Heart left ventricle (tissue), 16 donors: ENCODE measurements at regions of chr21 and their contacts with region 1.

Region 1: GRCh38 chr21:26842976-26843932 is 2.0 kb downstream of the ADAMTS1 start:
- DNase-seq: peak; percentile 93 to 96 (median 94)
- ATAC-seq: peak; percentile 60 to 68 (median 64)
- H3K4me3 ChIP-seq: peak overlapping the region; percentile 61 to 94 (median 84)
- H3K27ac ChIP-seq: peak overlapping the region; percentile 96 to 98 (median 98)
- H3K4me1 ChIP-seq: peaks cover 15 to 65% (median 46%) of the 10 kb centered on the region in 12 donors
- H3K27me3 ChIP-seq: peaks cover 0 to 38% (median 0%) of the 10 kb centered on the region in 9 donors
- CTCF ChIP-seq: peak in 11 of 12 donors; percentile 4 to 54 (median 30)
- POLR2A ChIP-seq: peak in 1 of 2 donors; percentile 23

Region 2: GRCh38 chr21:26801524-26801923 is 41.7 kb before region 1 on chr21:
- intact Hi-C with region 1: loop called in 2 of 10 experiments (anchors 1 to 5 kb)
- DNase-seq: no peak
- ATAC-seq: peak in 1 of 4 donors; percentile 31
- H3K4me3 ChIP-seq: peak overlapping the region in 3 of 12 donors; percentile 4 to 22 (median 19)
- H3K27ac ChIP-seq: peak overlapping the region; percentile 37 to 87 (median 75)
- H3K4me1 ChIP-seq: peaks cover 0 to 59% (median 10%) of the 10 kb centered on the region in 12 donors
- H3K27me3 ChIP-seq: no peaks in the 10 kb centered on the region
- CTCF ChIP-seq: no peak
- POLR2A ChIP-seq: no peak

Region 3: GRCh38 chr21:26925636-26926035 is 82.4 kb after region 1 on chr21:
- intact Hi-C with region 1: no loop called
- DNase-seq: no peak
- ATAC-seq: no peak
- H3K4me3 ChIP-seq: no peak overlapping the region
- H3K27ac ChIP-seq: no peak overlapping the region
- H3K4me1 ChIP-seq: no peaks in the 10 kb centered on the region
- H3K27me3 ChIP-seq: no peaks in the 10 kb centered on the region
- CTCF ChIP-seq: no peak
- POLR2A ChIP-seq: no peak

Region 4: DNA sequence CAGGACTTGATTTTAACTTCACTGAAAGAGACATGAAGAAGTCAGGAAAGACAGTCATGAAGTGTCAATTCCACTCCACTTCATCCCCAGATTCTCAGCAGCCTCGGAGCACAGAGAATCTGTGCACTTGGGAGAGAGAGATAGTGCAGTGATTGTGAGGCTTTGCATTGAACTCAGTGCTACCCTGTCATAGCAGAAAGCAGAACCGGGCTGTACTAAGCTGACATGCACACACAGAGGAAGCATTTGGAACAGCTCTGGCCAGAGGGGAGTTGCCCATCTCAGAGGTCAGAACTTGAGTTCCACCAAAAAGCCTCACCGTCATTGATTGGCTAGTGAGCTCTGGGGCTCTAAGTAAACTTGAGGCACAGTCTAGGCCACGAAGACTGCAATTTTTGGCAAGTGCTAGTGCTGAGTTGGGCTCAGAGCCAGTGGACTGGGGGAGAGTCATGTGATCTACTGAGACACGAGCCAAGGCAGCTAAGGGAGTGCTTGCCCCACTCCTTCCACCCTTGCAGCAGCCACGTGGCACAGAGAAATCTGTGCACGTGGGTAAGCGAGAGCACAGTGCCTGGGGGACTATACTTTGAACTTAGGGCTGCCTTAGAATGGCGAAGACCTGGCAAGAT is 933.8 kb after region 1 on chr21:
- intact Hi-C with region 1: loop called in 1 of 10 experiments (anchors 10 kb)
- DNase-seq: peak in 4 of 5 donors; percentile 27 to 53 (median 34)
- ATAC-seq: peak in 3 of 4 donors; percentile 20 to 50 (median 20)
- H3K4me3 ChIP-seq: no peak overlapping the region
- H3K27ac ChIP-seq: no peak overlapping the region
- H3K4me1 ChIP-seq: peaks cover 0 to 16% (median 2%) of the 10 kb centered on the region in 12 donors
- H3K27me3 ChIP-seq: no peaks in the 10 kb centered on the region
- CTCF ChIP-seq: no peak
- POLR2A ChIP-seq: no peak

Region 5: DNA sequence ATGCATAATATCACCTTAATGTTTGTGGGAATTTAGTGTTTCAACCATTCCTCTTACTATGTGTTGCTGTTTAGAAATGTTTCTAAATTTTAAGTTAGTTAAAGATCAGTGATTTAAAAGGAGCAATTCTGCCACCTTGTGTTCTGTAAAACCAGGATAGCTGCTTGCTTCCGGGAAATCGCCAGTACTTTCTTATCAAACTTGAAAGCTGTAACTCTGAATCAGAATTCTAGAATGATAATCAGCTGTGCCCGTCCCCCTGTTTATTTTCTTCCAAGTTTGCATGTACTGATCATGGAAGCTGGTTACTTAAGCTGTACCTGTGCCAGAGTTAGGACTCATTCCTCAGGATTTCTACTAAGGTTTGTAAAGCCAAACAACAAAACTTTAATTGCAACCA is 1493.1 kb after region 1 on chr21:
- intact Hi-C with region 1: loop called in 3 of 10 experiments (anchors 5 to 10 kb)
- DNase-seq: peak in 1 of 5 donors; percentile 18
- ATAC-seq: peak in 3 of 4 donors; percentile 34 to 55 (median 38)
- H3K4me3 ChIP-seq: no peak overlapping the region
- H3K27ac ChIP-seq: peak overlapping the region in 2 of 12 donors; percentile 26 to 34
- H3K4me1 ChIP-seq: peaks cover 0 to 36% (median 8%) of the 10 kb centered on the region in 12 donors
- H3K27me3 ChIP-seq: no peaks in the 10 kb centered on the region
- CTCF ChIP-seq: peak; percentile 19 to 74 (median 57)
- POLR2A ChIP-seq: no peak

Region 6: GRCh38 chr21:28633839-28634555 is 1790.7 kb after region 1 on chr21:
- intact Hi-C with region 1: loop called in 1 of 10 experiments (anchors 10 kb)
- DNase-seq: peak; percentile 63 to 82 (median 64)
- ATAC-seq: peak; percentile 84 to 94 (median 92)
- H3K4me3 ChIP-seq: no peak overlapping the region
- H3K27ac ChIP-seq: peak overlapping the region; percentile 37 to 85 (median 77)
- H3K4me1 ChIP-seq: peaks cover 0 to 35% (median 27%) of the 10 kb centered on the region in 12 donors
- H3K27me3 ChIP-seq: no peaks in the 10 kb centered on the region
- CTCF ChIP-seq: no peak
- POLR2A ChIP-seq: no peak